ENCODE measurements at regions of chr17 and their contacts with region 1.

Region 1: GRCh38 chr17:36937966-36938565 is 791 bp downstream of the LHX1 start:
- H3K4me3 ChIP-seq: peak overlapping the region; percentile 69
- H3K27ac ChIP-seq: peak overlapping the region; percentile 73; the same call in 1 of the 2 replicates
- H3K4me1 ChIP-seq: peaks cover 3% of the 10 kb centered on the region; the same call in 1 of the 2 replicates
- CTCF ChIP-seq: no peak

Region 2: GRCh38 chr17:36849871-36850348 is 88.2 kb before region 1 on chr17:
- CTCF ChIA-PET with region 1: interaction called, 6 read pairs
- POLR2A ChIA-PET with region 1: interaction called, 12 read pairs
- H3K4me3 ChIP-seq: no peak overlapping the region
- H3K27ac ChIP-seq: no peak overlapping the region
- H3K4me1 ChIP-seq: peaks cover 5% of the 10 kb centered on the region; the same call in 1 of the 2 replicates
- CTCF ChIP-seq: no peak

Region 3: GRCh38 chr17:36901506-36901905 is 36.6 kb before region 1 on chr17:
- CTCF ChIA-PET with region 1: interaction called, 3 read pairs
- POLR2A ChIA-PET with region 1: interaction called, 33 read pairs
- H3K4me3 ChIP-seq: no peak overlapping the region
- H3K27ac ChIP-seq: no peak overlapping the region; the same call in 1 of the 2 replicates
- H3K4me1 ChIP-seq: 0 out of 2 replicates have a peak, but pooled peaks cover 2% of the 10 kb centered on the region
- CTCF ChIP-seq: no peak

Region 4: DNA sequence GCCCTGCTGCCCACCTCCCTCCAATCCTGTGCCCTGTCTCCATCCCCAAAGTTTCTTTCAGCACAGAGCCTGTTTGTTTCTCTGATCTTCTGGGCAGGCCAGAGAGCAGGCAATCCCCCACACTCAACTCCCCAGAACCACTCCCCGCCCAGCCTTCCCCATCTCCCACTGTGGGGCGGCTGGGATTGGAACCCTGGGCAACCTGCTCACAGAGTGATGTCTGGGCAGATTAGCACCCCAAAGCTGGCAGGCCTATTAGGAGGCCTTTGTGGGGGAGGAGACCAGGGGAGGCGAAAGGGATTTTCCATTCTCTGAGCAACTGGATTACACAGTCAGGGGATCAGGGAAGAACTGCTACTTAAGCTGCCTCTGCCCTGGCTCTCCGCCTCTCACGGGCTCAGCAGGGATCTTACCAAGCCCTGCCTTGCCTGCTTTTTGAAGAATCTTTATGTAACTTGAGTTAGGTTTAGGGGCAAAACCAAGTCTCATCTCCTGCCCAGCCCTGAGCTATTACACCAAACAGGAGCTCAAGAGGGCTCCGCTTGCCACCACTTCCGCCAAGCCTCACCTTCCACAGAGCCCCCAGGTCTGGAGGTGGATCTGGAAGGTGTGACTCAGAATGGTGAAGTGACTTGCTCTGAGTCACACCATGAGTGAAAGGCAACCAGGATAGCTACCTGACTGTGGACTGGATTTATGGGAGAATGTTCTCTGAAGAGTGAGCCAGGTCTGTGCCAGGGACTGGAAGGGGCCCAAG is 16.8 kb before region 1 on chr17:
- CTCF ChIA-PET with region 1: interaction called, 3 read pairs
- POLR2A ChIA-PET with region 1: interaction called, 56 read pairs
- H3K4me3 ChIP-seq: no peak overlapping the region
- H3K27ac ChIP-seq: peak overlapping the region; percentile 56
- H3K4me1 ChIP-seq: peaks cover 16% of the 10 kb centered on the region
- CTCF ChIP-seq: no peak

Region 5: DNA sequence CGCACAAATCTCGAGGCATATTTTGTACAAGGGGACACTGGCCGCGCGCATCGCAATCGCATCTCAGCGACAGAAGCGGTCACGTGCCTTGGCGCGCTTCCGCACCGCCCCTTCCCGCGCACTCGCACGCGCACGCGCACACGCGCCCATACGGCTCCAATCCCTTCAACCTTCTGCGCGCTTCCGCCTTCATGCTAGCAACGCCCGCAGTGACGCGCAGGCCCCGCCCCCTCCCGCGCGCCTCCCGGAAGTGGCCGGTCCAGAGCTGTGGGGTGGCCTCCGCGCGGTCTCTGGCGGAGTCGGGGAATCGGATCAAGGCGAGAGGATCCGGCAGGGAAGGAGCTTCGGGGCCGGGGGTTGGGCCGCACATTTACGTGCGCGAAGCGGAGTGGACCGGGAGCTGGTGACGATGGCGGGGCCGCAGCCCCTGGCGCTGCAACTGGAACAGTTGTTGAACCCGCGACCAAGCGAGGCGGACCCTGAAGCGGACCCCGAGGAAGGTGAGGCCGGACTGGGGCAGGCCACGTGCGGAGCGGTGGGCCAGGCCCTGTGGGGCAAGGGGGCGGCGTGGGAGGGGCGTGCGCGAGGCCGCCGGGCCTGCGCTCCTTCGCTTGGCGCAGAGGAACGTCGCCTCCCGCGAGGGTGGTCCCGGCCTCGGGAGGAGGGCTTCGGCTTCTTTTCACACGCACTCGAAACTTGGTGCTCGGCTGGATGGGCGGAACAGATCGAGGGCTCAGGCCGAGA is 10.8 kb after region 1 on chr17 and contains the start of gene AATF:
- CTCF ChIA-PET with region 1: interaction called, 4 read pairs
- POLR2A ChIA-PET with region 1: interaction called, 92 read pairs
- H3K4me3 ChIP-seq: peak within 1 kb of the TSS; percentile 89
- H3K27ac ChIP-seq: peak within 1 kb of the TSS; percentile 85
- H3K4me1 ChIP-seq: peaks cover 3% of the 10 kb centered on the region; the same call in 1 of the 2 replicates
- CTCF ChIP-seq: peak; percentile 61; the same call in 1 of the 2 replicates

Measured in HEK293 (cell line).